PC-3 (cell line): ENCODE measurements at regions of chrX and their contacts with region 1.

Region 1: DNA sequence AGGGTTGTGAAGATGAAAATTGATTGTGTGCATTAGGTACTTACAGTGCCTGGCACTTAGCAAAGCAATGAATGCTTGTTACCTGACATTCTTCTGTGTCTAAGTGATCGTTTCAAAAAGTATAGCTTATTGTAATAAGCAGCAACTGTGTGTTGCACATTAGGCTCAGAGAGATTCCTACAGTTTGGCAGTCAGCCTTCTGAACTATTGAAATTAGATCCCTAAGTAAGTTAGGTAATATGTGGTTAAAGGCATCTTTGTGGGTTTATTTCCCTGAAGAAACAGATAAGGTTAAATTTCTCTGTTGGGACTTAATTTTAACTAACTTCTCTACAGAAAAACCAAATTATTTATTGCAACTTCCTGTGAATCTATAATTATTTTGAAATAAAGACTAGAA is 93.4 kb downstream of the REPS2 start:
- DNase-seq: peak; percentile 53
- ATAC-seq: peak; percentile 46
- H3K4me3 ChIP-seq: no peak overlapping the region
- H3K27ac ChIP-seq: peak overlapping the region; percentile 47
- H3K4me1 ChIP-seq: peaks cover 21% of the 10 kb centered on the region
- H3K27me3 ChIP-seq: no peaks in the 10 kb centered on the region
- CTCF ChIP-seq: no peak

Region 2: GRCh38 chrX:16953606-16954220 is 86.1 kb before region 1 on chrX:
- CTCF ChIA-PET with region 1: no interaction called
- POLR2A ChIA-PET with region 1: no interaction called
- intact Hi-C with region 1: loop called (anchors 5 kb)
- DNase-seq: peak; percentile 77
- ATAC-seq: peak; percentile 75
- H3K4me3 ChIP-seq: peak overlapping the region; percentile 59
- H3K27ac ChIP-seq: peak overlapping the region; percentile 91
- H3K4me1 ChIP-seq: peaks cover 36% of the 10 kb centered on the region
- H3K27me3 ChIP-seq: no peaks in the 10 kb centered on the region
- CTCF ChIP-seq: no peak

Region 3: GRCh38 chrX:17098516-17099247 is 58.9 kb after region 1 on chrX:
- CTCF ChIA-PET with region 1: no interaction called
- POLR2A ChIA-PET with region 1: no interaction called
- intact Hi-C with region 1: no loop called
- DNase-seq: no peak
- ATAC-seq: no peak
- H3K4me3 ChIP-seq: no peak overlapping the region
- H3K27ac ChIP-seq: no peak overlapping the region
- H3K4me1 ChIP-seq: no peaks in the 10 kb centered on the region
- H3K27me3 ChIP-seq: no peaks in the 10 kb centered on the region
- CTCF ChIP-seq: no peak